ENCODE measurements at regions of chr21 and their contacts with region 1.

Region 1: DNA sequence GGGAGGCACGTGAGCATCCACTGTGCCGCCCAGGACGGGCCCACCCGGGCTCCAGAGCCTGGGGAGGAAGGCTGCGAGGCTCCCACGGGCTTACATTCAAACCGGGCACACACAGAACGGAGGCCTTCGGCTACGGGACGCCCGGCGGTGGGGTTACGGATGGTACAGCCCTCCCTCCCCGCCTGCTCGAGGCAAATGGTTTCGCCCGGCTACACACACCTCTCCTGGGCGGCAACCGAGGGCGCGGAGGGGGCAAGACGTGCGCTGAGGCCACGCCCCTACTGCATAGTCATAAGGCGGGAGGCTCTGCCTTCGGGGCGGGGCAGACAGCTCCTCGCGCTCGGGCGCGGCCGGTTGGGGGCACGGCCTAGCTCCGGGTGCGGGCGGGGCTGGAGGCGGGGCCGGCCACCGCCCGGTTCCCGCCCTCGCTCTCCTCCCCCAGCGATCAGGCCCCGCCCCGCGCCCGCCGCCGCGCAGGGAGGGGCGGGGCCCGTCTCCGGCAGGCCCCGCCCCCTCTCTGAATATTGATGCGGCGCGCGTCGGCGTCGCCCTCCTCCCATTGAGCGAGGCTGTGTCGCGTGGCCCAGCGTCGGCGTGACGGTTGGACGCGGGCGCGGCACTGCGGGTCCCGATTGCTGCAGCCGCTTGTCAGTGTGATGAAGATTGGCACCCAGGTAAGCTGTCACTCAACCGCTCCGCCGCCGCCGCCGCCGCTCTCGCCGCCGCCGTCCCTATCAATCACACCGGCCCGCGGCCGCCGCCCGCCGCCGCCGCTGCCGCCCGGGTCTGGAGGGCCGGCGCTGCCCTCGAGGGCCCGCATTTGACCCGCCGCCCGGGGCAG is at the start of gene PKNOX1:
- DNase-seq: peak; percentile 98 to 99 (median 98)
- H3K4me3 ChIP-seq: peak within 1 kb of the TSS; percentile 79
- H3K27ac ChIP-seq: peak within 1 kb of the TSS; percentile 99
- H3K4me1 ChIP-seq: no peaks in the 10 kb centered on the region
- H3K27me3 ChIP-seq: no peaks in the 10 kb centered on the region
- CTCF ChIP-seq: no peak
- EP300 ChIP-seq: peak; percentile 47
- POLR2A ChIP-seq: peak; percentile 59
- total RNA-seq, gene PKNOX1: 7.0 to 50.9 (median 31.0) TPM

Region 2: GRCh38 chr21:42607102-42607789 is 367.0 kb before region 1 on chr21:
- intact Hi-C with region 1: no loop called
- DNase-seq: no peak
- H3K4me3 ChIP-seq: no peak overlapping the region
- H3K27ac ChIP-seq: no peak overlapping the region
- H3K4me1 ChIP-seq: no peaks in the 10 kb centered on the region
- H3K27me3 ChIP-seq: no peaks in the 10 kb centered on the region
- CTCF ChIP-seq: no peak
- EP300 ChIP-seq: no peak
- POLR2A ChIP-seq: no peak

Region 3: DNA sequence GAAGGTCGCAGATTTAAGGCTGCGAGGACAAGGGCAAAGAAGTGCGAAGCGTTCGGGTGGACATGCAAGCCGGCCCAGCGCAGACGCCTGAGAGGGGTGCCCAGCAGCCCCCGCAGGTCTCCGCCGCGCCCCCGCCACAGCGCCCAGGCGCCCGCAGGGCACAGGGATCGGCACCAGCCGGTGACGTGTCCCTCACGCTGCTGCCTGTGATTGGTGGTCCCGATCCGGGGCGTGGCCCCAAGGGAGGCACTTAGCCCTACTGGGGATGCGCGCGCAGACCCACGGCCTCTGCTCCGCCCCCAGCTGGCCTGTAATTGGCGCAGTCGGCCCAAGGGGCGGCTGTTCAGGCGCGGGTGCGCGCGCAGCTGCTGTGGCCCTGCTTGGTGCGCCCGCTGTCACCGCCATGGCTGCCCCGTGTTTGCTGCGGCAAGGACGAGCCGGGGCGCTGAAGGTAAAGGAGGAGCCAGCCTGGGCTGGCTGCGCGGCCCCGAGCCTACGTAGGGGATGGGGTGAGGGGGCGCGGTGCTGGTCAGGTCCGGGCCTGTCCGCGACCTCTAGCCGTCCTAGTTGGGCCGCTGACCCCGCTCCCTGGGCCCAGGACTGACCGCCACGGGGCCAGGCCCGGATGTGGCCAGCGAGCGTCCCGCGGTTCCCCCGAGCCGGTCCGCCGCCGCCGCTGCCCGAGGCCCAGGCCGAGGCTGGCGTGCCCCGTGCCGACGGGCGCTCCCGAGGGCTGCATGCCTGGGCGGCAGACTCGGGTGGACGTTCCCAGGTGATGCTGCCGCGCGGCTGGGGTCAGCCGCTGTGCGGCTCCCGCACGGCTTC is 81.1 kb before region 1 on chr21 and contains the start of gene NDUFV3:
- intact Hi-C with region 1: loop called in 1 of 4 experiments (anchors 10 kb)
- DNase-seq: peak; percentile 99 to 100 (median 100)
- H3K4me3 ChIP-seq: peak within 1 kb of the TSS; percentile 85
- H3K27ac ChIP-seq: peak within 1 kb of the TSS; percentile 80 to 88
- H3K4me1 ChIP-seq: no peaks in the 10 kb centered on the region
- H3K27me3 ChIP-seq: no peaks in the 10 kb centered on the region
- CTCF ChIP-seq: no peak
- EP300 ChIP-seq: no peak
- POLR2A ChIP-seq: peak; percentile 84
- total RNA-seq, gene NDUFV3: 32.0 to 41.6 (median 37.8) TPM